Activated naive CD8-positive, alpha-beta T cell treated with anti-CD3 and anti-CD28 coated beads, Interleukin-2, amount 10 ng/mL, durations not matched to agents 7 days and 5 days (primary cell): ENCODE measurements at regions of chr2 and their contacts with region 1.

Region 1: DNA sequence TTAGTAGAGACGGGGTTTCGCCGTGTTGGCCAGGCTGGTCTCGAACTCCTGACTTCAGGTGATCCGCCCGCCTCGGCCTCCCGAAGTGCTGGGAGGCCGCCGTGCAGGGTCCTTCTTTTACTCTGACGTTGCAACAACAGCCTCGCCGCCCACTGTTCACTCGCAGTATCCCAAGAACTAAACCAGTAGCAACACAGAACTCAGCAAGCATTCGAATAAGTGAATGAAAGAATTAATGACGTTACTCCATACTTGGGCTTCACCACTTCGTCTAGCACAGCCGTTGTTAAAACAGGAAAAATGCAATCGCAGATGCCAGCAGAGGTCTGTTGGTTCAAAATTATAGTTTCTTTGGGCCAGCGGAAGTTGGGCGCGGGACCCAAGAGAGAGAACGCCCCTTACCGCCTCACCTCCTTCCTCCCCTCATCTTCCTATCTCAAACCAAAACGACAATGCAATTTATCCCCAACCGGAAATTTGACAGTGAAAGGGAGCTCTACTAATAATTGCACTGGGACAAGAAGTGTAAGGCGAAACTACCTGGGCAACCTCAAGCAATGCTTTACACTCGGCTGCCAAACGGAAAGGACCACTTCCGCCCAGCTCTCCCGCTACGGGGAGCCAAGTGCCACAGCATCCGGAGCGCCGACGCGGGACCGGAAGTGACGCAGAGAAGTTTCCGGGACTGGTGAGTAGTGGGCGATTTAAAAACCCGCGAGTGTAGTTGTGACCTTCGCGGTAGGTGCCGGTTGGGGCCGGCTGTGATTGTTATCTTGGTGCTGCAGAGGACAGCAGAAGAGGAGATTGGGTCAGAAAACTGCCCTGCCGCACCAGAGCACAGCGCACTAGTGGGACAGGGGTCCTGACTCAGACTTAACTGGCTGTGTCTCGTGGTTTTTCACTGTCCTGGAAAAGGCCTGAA is at the starts of genes NIF3L1 and PPIL3:
- DNase-seq: peak; percentile 94
- ATAC-seq: peak; percentile 79
- H3K4me3 Mint-ChIP-seq: peak within 1 kb of the TSS; percentile 96
- H3K27ac Mint-ChIP-seq: peak within 1 kb of the TSS; percentile 99
- H3K4me1 Mint-ChIP-seq: peaks cover 35% of the 10 kb centered on the region
- H3K27me3 Mint-ChIP-seq: no peaks in the 10 kb centered on the region
- total RNA-seq, gene NIF3L1: 36.9 to 37.7 TPM
- total RNA-seq, gene PPIL3: 44.2 to 45.2 TPM

Region 2: GRCh38 chr2:200713003-200713703 is 175.8 kb before region 1 on chr2:
- POLR2A ChIA-PET with region 1: interaction called, 10 read pairs
- DNase-seq: peak; percentile 84
- ATAC-seq: peak; percentile 99
- H3K4me3 Mint-ChIP-seq: peak overlapping the region; percentile 82
- H3K27ac Mint-ChIP-seq: peak overlapping the region; percentile 99
- H3K4me1 Mint-ChIP-seq: peaks cover 18% of the 10 kb centered on the region
- H3K27me3 Mint-ChIP-seq: peaks cover 1% of the 10 kb centered on the region

Region 3: GRCh38 chr2:200811336-200812121 is 77.4 kb before region 1 on chr2 and contains the start of gene BZW1:
- POLR2A ChIA-PET with region 1: interaction called, 12 read pairs
- DNase-seq: peak; percentile 95
- ATAC-seq: peak; percentile 81
- H3K4me3 Mint-ChIP-seq: peak within 1 kb of the TSS; percentile 95
- H3K27ac Mint-ChIP-seq: peak within 1 kb of the TSS; percentile 96
- H3K4me1 Mint-ChIP-seq: peaks cover 36% of the 10 kb centered on the region
- H3K27me3 Mint-ChIP-seq: no peaks in the 10 kb centered on the region
- total RNA-seq, gene BZW1: 197 to 199 TPM

Region 4: GRCh38 chr2:200963124-200963917 is 74.4 kb after region 1 on chr2 and contains the start of gene ORC2:
- POLR2A ChIA-PET with region 1: interaction called, 11 read pairs
- DNase-seq: peak; percentile 96
- ATAC-seq: peak; percentile 93
- H3K4me3 Mint-ChIP-seq: peak within 1 kb of the TSS; percentile 96
- H3K27ac Mint-ChIP-seq: peak within 1 kb of the TSS; percentile 97
- H3K4me1 Mint-ChIP-seq: peaks cover 43% of the 10 kb centered on the region
- H3K27me3 Mint-ChIP-seq: no peaks in the 10 kb centered on the region
- total RNA-seq, gene ORC2: 52.0 to 55.0 TPM